B cell (primary cell): ENCODE measurements at regions of chr1 and their contacts with region 1.

Region 1: GRCh38 chr1:26417111-26417759 is 6.6 kb downstream of the LIN28A start:
- DNase-seq: peak; percentile 85
- ATAC-seq: peak; percentile 99
- H3K4me3 ChIP-seq: no peak overlapping the region
- H3K4me3 Mint-ChIP-seq: no peak overlapping the region
- H3K27ac ChIP-seq: no peak overlapping the region
- H3K27ac Mint-ChIP-seq: no peak overlapping the region
- H3K4me1 ChIP-seq: no peaks in the 10 kb centered on the region
- H3K4me1 Mint-ChIP-seq: no peaks in the 10 kb centered on the region
- H3K27me3 ChIP-seq: peaks cover 0 to 22% (median 19%) of the 10 kb centered on the region in 4 experiments
- H3K27me3 Mint-ChIP-seq: peaks cover 40% of the 10 kb centered on the region
- CTCF ChIP-seq: peak; percentile 90

Region 2: GRCh38 chr1:26111530-26112406 is 305.5 kb before region 1 on chr1 and contains the start of gene PDIK1L:
- CTCF ChIA-PET with region 1: interaction called, 16 read pairs
- POLR2A ChIA-PET with region 1: no interaction called
- intact Hi-C with region 1: no loop called
- DNase-seq: peak; percentile 97
- ATAC-seq: peak; percentile 83
- H3K4me3 ChIP-seq: peak within 1 kb of the TSS; percentile 65 to 95 (median 94)
- H3K4me3 Mint-ChIP-seq: peak within 1 kb of the TSS; percentile 93
- H3K27ac ChIP-seq: peak within 1 kb of the TSS; percentile 60 to 81
- H3K27ac Mint-ChIP-seq: peak within 1 kb of the TSS; percentile 94
- H3K4me1 ChIP-seq: peaks cover 12 to 17% of the 10 kb centered on the region in 2 donors
- H3K4me1 Mint-ChIP-seq: peaks cover 16% of the 10 kb centered on the region
- H3K27me3 ChIP-seq: no peaks in the 10 kb centered on the region
- H3K27me3 Mint-ChIP-seq: no peaks in the 10 kb centered on the region
- CTCF ChIP-seq: no peak
- total RNA-seq, gene PDIK1L: 15.2 and 17.3 TPM in 2 replicates

Region 3: GRCh38 chr1:26169669-26170471 is 247.4 kb before region 1 on chr1 and contains the start of gene ZNF593:
- CTCF ChIA-PET with region 1: interaction called, 20 read pairs
- POLR2A ChIA-PET with region 1: no interaction called
- intact Hi-C with region 1: no loop called
- DNase-seq: peak; percentile 92
- ATAC-seq: peak; percentile 97
- H3K4me3 ChIP-seq: peak within 1 kb of the TSS; percentile 58 to 94 (median 86)
- H3K4me3 Mint-ChIP-seq: peak within 1 kb of the TSS; percentile 93
- H3K27ac ChIP-seq: peak within 1 kb of the TSS; percentile 38 to 91
- H3K27ac Mint-ChIP-seq: peak within 1 kb of the TSS; percentile 85
- H3K4me1 ChIP-seq: peaks cover 7 to 15% of the 10 kb centered on the region in 2 donors
- H3K4me1 Mint-ChIP-seq: peaks cover 15% of the 10 kb centered on the region
- H3K27me3 ChIP-seq: no peaks in the 10 kb centered on the region
- H3K27me3 Mint-ChIP-seq: no peaks in the 10 kb centered on the region
- CTCF ChIP-seq: peak; percentile 79
- total RNA-seq, gene ZNF593: 10.7 and 13.5 TPM in 2 replicates

Region 4: DNA sequence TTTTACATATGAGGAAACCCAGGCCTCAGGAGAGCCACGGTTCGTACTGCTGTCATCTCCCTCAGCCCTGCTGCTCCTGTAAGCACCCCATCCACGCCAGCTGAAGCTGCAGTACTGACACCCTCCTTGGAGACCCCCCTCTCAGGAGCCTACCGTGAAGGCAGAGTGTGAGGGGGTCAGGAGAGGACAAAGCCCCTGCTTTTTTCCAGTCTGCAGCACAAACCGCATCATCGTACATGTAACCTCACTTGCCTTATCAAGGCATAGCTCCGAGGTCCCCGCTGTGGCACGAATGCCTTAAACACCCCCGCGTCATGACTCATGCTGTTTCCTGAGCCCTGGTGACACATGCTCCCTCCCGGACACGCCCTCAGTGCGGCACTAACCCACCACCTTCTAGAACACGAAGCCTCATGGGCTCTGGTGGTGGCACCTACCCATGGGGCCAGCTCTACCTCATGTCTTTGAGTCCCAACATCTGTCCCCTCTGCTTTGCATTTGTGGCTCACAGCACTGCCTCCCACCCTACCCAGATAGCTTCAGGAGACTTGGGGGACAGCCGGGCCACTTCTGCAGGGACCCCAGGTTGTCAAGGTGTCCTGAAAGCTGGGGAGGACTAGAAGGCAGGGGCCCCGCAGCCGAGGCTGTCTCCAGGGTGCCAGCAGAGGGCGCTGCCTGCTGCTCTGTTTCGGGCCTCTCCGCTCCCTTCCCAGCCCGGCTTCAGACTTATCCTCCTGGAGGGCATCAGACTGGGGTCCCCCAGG is 132.5 kb before region 1 on chr1:
- CTCF ChIA-PET with region 1: interaction called, 24 read pairs
- POLR2A ChIA-PET with region 1: no interaction called
- intact Hi-C with region 1: no loop called
- DNase-seq: peak; percentile 87
- ATAC-seq: peak; percentile 47
- H3K4me3 ChIP-seq: peak overlapping the region in 2 of 5 experiments; percentile 5 to 19
- H3K4me3 Mint-ChIP-seq: peak overlapping the region; percentile 87
- H3K27ac ChIP-seq: peak overlapping the region; percentile 93 to 96
- H3K27ac Mint-ChIP-seq: peak overlapping the region; percentile 97
- H3K4me1 ChIP-seq: peaks cover 79 to 89% of the 10 kb centered on the region in 2 donors
- H3K4me1 Mint-ChIP-seq: peaks cover 88% of the 10 kb centered on the region
- H3K27me3 ChIP-seq: no peaks in the 10 kb centered on the region
- H3K27me3 Mint-ChIP-seq: no peaks in the 10 kb centered on the region
- CTCF ChIP-seq: peak; percentile 77

Region 5: DNA sequence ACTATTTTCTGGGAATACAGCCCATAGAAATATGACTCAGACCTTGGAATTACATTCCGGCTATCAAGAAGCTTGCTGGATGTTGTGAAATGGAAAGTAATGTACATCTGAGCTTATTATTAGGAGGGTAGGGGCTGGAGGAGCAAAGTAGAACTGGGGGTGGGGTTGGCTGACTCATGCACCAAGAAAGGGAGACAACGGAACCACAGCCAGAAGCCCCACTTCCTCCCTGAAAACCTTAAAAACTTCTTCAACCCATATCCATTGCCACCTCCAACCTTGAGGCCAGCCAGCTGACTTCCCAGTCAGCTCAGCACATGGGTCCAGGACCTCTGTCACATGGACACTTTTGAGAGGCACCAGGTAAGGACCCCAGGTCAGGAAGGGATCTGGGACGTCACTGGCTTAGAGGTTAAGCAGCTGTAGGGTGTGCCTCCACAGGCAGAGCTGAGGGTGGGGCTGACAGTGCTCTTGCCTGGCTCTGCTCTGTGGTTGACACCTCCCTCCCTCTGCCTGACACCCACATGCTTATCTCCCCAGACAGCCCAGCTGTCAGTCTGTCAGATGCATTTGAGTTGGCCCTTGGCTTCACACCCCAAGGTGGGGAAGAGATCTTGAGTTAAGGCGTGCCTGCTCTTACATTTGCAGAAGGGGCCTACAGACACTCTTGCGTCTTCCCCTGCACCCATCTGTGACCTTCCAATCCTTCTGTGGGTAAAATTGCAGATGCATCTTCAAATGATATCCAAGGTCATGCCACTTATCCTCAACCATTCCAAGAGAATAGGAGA is 39.0 kb before region 1 on chr1:
- CTCF ChIA-PET with region 1: interaction called, 13 read pairs
- POLR2A ChIA-PET with region 1: no interaction called
- intact Hi-C with region 1: no loop called
- DNase-seq: peak; percentile 62
- ATAC-seq: peak; percentile 93
- H3K4me3 ChIP-seq: peak overlapping the region in 3 of 5 experiments; percentile 17 to 36 (median 17)
- H3K4me3 Mint-ChIP-seq: peak overlapping the region; percentile 77
- H3K27ac ChIP-seq: peak overlapping the region; percentile 52 to 76
- H3K27ac Mint-ChIP-seq: peak overlapping the region; percentile 93
- H3K4me1 ChIP-seq: peaks cover 25 to 40% of the 10 kb centered on the region in 2 donors
- H3K4me1 Mint-ChIP-seq: peaks cover 46% of the 10 kb centered on the region
- H3K27me3 ChIP-seq: no peaks in the 10 kb centered on the region
- H3K27me3 Mint-ChIP-seq: no peaks in the 10 kb centered on the region
- CTCF ChIP-seq: no peak

Region 6: GRCh38 chr1:26431979-26432695 is 14.9 kb after region 1 on chr1 and contains the start of gene DHDDS:
- CTCF ChIA-PET with region 1: interaction called, 16 read pairs
- POLR2A ChIA-PET with region 1: no interaction called
- intact Hi-C with region 1: no loop called
- DNase-seq: peak; percentile 99
- ATAC-seq: peak; percentile 97
- H3K4me3 ChIP-seq: peak within 1 kb of the TSS; percentile 62 to 97 (median 77)
- H3K4me3 Mint-ChIP-seq: peak within 1 kb of the TSS; percentile 95
- H3K27ac ChIP-seq: peak within 1 kb of the TSS; percentile 61 to 86
- H3K27ac Mint-ChIP-seq: peak within 1 kb of the TSS; percentile 93
- H3K4me1 ChIP-seq: peaks cover 15 to 21% of the 10 kb centered on the region in 2 donors
- H3K4me1 Mint-ChIP-seq: peaks cover 20% of the 10 kb centered on the region
- H3K27me3 ChIP-seq: no peaks in the 10 kb centered on the region
- H3K27me3 Mint-ChIP-seq: no peaks in the 10 kb centered on the region
- CTCF ChIP-seq: no peak
- total RNA-seq, gene DHDDS: 54.2 and 61.7 TPM in 2 replicates